ENCODE measurements at regions of chr3 and their contacts with region 1.

Region 1: DNA sequence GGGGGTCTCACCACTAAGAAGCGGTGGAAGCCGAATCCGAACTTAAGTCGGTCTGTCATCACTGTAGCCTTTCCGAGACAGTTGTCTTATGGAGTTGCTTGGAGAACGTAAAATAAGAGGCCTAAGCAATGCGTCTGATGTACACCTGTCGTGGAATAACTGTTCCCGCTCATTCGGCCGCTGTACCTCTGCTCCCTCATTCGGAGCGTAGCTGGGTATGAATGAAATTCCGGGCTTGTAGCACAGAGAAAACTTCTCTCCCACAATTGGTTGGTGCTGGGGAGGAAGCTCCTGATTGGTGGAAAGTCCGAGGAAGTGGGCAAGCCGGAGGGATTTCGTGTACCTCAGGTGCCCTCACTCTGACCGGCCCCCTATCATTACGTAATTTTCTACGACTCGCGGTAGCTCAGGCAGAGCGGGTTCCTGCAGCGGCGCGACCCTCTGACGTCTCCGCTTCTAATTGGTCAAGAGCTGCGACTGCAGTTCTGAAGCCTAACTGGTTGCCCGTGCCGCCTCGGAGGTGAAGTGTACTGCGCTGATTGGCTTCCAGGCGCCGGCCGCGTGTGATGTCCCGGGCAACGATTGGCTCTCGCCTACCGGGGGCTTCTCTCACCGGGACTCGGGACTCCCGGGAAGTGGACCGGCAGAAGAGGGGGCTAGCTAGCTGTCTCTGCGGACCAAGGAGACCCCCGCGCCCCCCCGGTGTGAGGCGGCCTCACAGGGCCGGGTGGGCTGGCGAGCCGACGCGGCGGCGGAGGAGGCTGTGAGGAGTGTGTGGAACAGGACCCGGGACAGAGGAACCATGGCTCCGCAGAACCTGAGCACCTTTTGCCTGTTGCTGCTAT is at the start of gene DNAJB11:
- DNase-seq: peak; percentile 100
- H3K4me3 Mint-ChIP-seq: peak within 1 kb of the TSS; percentile 95
- H3K27ac Mint-ChIP-seq: peak within 1 kb of the TSS; percentile 91
- H3K4me1 Mint-ChIP-seq: peaks cover 49% of the 10 kb centered on the region
- H3K27me3 Mint-ChIP-seq: no peaks in the 10 kb centered on the region
- total RNA-seq, gene DNAJB11: 36.9 to 39.5 TPM

Region 2: DNA sequence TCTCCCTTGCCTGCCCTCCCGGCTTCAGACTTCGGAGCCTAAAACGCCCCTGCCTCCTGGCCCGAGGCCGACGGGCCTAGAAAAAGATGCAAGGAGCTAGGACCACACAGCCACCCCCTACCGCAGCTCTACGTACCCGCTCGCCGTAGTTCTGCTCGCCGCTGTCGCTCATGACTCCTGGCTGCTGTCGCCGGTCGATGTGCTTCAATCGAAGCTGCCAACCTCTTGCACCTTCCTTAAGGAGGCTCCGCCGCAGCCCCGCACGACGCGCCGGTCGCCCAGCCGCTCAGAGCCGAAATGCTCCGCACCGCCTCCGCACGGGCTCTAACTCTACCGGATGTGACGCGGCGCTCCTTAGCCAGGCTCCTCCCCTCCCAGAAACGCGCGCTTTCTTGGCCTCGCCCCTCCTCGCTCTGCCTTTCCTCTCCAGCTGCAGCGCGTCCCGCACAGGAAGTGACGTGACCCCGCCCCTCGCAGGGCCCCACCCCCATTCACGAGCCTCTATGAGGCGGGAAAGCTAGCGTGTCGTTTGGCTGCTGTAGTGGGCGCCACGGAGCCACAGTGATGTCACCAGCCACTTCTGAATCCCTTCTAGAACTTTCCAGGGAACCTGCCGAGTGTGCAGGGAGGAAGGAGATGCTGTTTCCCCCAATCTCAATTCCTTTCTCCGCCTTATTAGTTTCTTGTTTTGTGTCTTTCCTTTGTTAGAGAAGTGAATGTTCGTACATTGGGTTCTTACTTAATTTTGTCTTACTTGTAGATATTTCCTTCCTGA is 632.4 kb before region 1 on chr3 and contains the start of gene TRA2B:
- CTCF ChIA-PET with region 1: interaction called, 14 read pairs
- POLR2A ChIA-PET with region 1: interaction called, 30 read pairs
- intact Hi-C with region 1: loop called (anchors 1 kb)
- DNase-seq: peak; percentile 99
- H3K4me3 Mint-ChIP-seq: peak within 1 kb of the TSS; percentile 99
- H3K27ac Mint-ChIP-seq: peak within 1 kb of the TSS; percentile 99
- H3K4me1 Mint-ChIP-seq: peaks cover 21% of the 10 kb centered on the region
- H3K27me3 Mint-ChIP-seq: peaks cover 3% of the 10 kb centered on the region
- total RNA-seq, gene TRA2B: 184 to 187 TPM

Region 3: DNA sequence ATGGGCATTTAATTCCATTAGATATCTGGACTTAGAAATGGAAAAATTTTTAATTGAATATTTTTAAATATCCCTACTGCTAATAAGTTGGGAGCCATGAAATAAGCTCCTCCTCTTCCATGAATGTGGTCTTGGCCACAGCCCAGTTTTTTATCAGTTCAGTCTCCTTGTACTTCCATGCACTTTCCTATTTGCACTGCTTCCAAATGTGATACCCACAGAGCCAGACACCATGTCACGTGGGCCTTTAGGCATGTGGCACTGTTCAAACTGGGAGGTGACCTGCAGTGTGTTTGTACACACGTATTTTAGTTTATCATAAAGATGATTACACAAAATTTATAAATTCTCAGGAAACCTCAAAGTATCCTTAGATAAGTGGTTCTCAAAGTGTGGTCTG is 128.2 kb before region 1 on chr3:
- CTCF ChIA-PET with region 1: no interaction called
- POLR2A ChIA-PET with region 1: no interaction called
- intact Hi-C with region 1: no loop called
- DNase-seq: no peak
- H3K4me3 Mint-ChIP-seq: no peak overlapping the region
- H3K27ac Mint-ChIP-seq: no peak overlapping the region
- H3K4me1 Mint-ChIP-seq: no peaks in the 10 kb centered on the region
- H3K27me3 Mint-ChIP-seq: no peaks in the 10 kb centered on the region

Region 4: DNA sequence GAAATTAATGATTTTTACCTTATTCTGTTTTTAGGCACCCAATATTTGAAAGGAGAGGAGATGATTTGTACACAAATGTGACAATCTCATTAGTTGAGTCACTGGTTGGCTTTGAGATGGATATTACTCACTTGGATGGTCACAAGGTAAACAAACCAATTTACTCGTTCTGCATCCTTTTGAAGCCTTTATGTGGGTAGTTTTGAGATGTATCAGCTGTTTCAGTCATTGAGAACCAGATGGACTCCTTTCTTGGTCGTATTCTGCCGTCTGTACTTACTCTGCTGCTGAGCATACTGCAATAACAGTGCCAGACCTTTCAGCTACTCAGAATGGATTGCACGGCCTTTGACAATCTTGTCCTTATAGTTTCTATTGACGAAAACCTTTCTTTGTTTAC is 13.5 kb after region 1 on chr3:
- CTCF ChIA-PET with region 1: interaction called, 4 read pairs
- POLR2A ChIA-PET with region 1: interaction called, 10 read pairs
- intact Hi-C with region 1: no loop called
- DNase-seq: no peak
- H3K4me3 Mint-ChIP-seq: no peak overlapping the region
- H3K27ac Mint-ChIP-seq: no peak overlapping the region
- H3K4me1 Mint-ChIP-seq: peaks cover 6% of the 10 kb centered on the region
- H3K27me3 Mint-ChIP-seq: no peaks in the 10 kb centered on the region

Region 5: DNA sequence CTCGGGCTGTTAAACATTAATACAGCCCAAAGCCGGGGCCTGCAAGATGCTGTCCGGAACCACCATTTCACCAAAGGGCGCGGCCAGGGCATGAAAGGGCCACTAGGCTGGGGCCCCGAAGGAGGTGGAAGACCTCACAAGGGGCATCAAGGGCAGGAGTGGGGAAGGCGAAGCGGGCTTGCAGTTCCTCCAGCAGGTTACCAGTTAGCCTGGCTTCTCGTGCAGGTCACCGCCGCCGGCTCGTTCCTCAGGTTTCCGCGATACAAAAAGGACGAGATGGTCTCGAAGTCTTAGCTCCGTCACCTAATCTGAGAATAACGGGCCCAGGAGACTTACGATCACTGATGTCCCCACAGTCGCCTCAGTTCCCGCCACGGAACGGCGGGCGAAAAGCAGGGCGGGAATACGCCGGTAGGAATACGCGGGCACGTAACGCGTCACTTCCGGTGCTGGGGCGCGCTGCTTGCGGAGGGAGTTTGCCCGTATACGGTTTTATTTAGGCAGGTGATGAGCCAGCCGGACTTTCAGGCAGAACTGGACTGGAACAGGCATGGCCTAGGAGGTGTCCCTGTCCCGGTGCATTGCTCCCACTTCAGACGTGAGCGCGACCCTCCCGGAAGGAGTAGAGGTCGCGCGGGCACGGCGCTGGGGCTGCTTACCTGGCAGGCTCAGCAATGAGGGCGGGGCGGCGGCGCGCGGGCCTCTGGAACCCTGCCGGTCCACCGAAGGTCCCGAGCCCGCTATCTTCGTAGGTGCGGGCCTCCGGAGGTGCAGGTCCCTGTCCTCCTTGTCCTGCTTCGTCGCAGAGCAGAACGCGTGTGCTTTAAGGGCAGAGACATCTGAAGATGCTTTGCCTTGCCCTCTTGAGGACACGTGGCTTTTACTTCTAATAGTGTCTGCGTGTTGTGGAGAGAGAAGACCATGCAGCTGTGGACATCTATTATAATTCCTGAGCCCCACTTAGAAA is 236.1 kb after region 1 on chr3 and contains the start of gene RFC4:
- CTCF ChIA-PET with region 1: no interaction called
- POLR2A ChIA-PET with region 1: interaction called, 4 read pairs
- intact Hi-C with region 1: loop called (anchors 1 kb)
- DNase-seq: peak; percentile 91
- H3K4me3 Mint-ChIP-seq: peak within 1 kb of the TSS; percentile 93
- H3K27ac Mint-ChIP-seq: peak within 1 kb of the TSS; percentile 93
- H3K4me1 Mint-ChIP-seq: peaks cover 24% of the 10 kb centered on the region
- H3K27me3 Mint-ChIP-seq: no peaks in the 10 kb centered on the region
- total RNA-seq, gene RFC4: 118 to 127 TPM

Measured in activated CD4-positive, alpha-beta memory T cell treated with anti-CD3 and anti-CD28 coated beads for 36 hours (primary cell).